PC-3 (cell line): ENCODE measurements at regions of chr17 and their contacts with region 1.

Region 1: DNA sequence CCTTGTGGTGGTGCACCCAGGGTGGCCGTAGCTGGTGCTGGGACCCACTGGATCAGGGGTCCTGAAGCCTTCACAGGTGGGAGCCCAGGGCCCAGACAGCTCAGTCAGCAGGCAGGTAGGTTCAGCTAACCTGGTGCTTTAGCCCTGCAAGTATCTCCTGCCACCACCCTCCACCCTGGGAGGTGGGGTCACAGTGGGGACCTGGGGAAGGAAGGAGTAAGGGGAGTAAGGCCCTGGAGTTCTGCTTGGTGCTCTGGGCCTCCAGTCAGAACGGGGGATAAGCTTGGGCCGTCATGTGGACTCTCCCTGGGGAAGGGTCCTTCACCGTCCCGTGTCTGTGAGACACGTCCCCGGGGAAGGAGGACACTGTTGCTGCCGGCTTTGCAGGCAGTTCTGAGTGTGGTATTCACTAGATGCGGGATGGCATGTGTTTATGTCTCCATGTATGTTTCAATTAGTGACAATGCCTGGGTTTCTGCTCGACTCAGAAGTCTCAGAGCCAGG is 20.7 kb downstream of the SGSM2 start:
- DNase-seq: no peak
- ATAC-seq: no peak
- H3K4me3 ChIP-seq: no peak overlapping the region
- H3K27ac ChIP-seq: no peak overlapping the region
- H3K4me1 ChIP-seq: peaks cover 24% of the 10 kb centered on the region
- H3K27me3 ChIP-seq: no peaks in the 10 kb centered on the region
- CTCF ChIP-seq: no peak

Region 2: DNA sequence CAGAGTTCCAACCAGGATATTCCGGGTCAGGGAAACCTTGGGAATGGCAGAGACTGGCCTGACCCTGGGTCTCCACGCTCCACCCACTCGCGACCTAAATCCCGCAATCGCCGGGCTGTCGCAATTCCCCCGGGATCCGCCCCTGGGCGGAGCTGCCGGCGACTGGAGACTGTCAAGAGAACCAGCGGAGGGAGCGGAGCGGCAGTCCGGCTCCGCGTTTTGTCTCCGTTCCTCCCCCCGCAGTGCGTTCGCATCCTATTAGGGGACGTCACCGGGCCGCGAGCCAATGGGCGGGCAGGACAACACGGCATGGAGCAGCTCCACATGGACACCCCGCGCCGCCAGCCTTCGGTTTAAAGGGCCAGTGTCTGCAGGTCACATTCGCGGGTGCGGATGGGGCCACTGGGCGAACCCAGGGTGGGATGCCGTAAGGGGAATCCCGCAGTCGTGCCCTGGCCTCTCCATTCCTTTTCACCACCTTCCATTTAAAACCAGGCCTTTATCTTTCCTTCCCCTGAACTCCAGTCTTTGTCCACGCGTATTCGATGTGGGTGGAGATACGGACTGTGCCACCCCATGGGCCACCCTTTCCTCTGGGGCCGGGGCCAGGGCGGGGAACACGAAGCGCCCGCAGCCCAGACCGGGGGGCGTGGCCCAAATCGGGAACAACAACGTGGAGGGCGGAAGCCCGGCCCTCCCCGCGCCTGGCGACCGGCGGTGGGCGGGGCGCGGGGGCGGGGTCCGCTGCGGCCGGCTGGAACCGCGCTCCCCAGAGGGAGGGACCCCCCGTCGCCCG is 43.6 kb after region 1 on chr17:
- CTCF ChIA-PET with region 1: no interaction called
- POLR2A ChIA-PET with region 1: no interaction called
- intact Hi-C with region 1: loop called (anchors 2 kb)
- DNase-seq: peak; percentile 97
- ATAC-seq: peak; percentile 38
- H3K4me3 ChIP-seq: peak overlapping the region; percentile 98
- H3K27ac ChIP-seq: peak overlapping the region; percentile 95
- H3K4me1 ChIP-seq: peaks cover 56% of the 10 kb centered on the region
- H3K27me3 ChIP-seq: no peaks in the 10 kb centered on the region
- CTCF ChIP-seq: no peak